Heart right ventricle (tissue), 16 donors: ENCODE measurements at regions of chr7 and their contacts with region 1.

Region 1: GRCh38 chr7:99040104-99040958 is 103.6 kb downstream of the SMURF1 start:
- DNase-seq: peak; percentile 64 to 91
- ATAC-seq: peak; percentile 76 to 91 (median 85)
- H3K4me3 ChIP-seq: no peak overlapping the region
- H3K27ac ChIP-seq: peak overlapping the region in 6 of 10 donors; percentile 27 to 67 (median 49)
- H3K4me1 ChIP-seq: peaks cover 0 to 42% (median 9%) of the 10 kb centered on the region in 9 donors
- H3K27me3 ChIP-seq: no peaks in the 10 kb centered on the region
- CTCF ChIP-seq: peak; percentile 61 to 85 (median 77)

Region 2: DNA sequence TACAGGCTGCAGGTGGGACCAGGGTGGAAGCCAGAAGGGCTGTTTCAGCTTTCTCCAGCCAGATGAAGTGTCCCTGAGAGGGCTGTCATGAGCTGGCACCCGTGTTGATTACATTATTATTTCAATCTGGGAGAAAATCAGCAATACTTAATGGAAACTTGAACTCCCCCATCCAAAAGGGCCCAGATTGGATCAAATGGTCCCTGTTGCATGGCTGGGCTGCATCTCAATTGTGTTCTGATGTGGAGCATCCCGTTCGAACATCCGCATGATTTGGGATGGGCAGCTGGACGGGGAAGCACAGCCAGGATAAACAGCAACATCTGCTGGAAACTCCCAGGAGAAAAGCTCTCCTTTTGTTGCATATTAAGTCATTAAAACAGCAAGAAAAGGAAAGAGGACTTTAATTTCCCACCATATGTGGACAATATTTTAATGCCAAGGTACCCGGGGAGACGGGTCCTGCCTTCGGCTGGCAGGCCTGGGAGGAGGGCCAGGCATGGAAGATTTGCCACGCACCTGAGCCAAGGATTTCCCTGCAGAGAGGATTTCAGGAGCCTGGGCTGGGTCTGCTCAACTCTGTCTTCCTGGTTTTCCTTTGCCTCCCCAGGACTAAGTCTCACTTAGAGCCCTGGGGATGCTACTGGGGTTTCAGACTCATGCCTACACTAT is 370.9 kb before region 1 on chr7:
- intact Hi-C with region 1: no loop called
- DNase-seq: peak in 1 of 2 donors; percentile 13
- ATAC-seq: peak in 2 of 8 donors; percentile 44 to 57
- H3K4me3 ChIP-seq: no peak overlapping the region
- H3K27ac ChIP-seq: no peak overlapping the region
- H3K4me1 ChIP-seq: no peaks in the 10 kb centered on the region
- H3K27me3 ChIP-seq: peaks cover 0 to 35% (median 18%) of the 10 kb centered on the region in 7 donors
- CTCF ChIP-seq: no peak

Region 3: DNA sequence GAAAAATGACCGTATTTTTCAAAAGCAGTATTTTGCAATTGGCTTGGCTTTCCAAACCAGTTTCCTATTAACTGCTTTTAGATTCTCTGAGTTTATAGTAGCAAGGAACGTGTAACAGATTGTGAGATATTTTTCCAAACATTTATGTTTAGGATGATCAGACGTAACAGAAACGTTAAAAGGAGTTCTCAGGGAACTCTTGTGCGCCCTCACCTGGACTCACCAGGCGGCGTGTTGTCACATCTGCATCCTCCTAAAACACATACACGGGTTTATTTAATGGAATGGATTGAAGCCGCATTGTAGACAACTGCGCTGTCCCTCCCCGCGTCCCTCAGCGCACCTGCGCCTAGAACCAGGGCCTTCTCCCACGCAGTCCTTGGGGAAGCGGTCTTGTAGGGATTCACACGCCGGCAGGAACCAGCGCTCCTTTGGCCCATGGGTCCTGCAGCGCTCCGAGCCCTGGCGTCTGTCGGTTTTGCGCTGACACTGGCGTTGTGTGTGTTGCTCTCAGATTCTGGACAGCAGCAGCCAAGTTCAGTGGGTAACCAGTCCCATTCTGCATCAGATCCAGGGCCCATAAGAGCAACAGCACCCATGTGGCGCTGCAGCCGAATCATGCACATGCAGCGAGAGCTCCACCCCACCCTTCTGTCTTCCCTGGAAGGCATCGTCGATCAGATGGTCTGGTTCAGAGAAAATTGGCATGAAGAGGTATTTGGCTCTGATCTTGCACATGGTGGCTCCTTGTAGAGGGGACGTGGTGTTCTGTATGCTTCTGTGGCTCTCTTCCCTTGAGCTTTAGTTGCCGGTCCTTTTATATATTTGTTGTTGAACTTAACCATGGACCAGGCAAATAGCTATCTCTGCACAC is 47.1 kb before region 1 on chr7:
- intact Hi-C with region 1: no loop called
- DNase-seq: no peak
- ATAC-seq: peak in 1 of 8 donors; percentile 22
- H3K4me3 ChIP-seq: no peak overlapping the region
- H3K27ac ChIP-seq: no peak overlapping the region
- H3K4me1 ChIP-seq: no peaks in the 10 kb centered on the region
- H3K27me3 ChIP-seq: no peaks in the 10 kb centered on the region
- CTCF ChIP-seq: no peak

Region 4: DNA sequence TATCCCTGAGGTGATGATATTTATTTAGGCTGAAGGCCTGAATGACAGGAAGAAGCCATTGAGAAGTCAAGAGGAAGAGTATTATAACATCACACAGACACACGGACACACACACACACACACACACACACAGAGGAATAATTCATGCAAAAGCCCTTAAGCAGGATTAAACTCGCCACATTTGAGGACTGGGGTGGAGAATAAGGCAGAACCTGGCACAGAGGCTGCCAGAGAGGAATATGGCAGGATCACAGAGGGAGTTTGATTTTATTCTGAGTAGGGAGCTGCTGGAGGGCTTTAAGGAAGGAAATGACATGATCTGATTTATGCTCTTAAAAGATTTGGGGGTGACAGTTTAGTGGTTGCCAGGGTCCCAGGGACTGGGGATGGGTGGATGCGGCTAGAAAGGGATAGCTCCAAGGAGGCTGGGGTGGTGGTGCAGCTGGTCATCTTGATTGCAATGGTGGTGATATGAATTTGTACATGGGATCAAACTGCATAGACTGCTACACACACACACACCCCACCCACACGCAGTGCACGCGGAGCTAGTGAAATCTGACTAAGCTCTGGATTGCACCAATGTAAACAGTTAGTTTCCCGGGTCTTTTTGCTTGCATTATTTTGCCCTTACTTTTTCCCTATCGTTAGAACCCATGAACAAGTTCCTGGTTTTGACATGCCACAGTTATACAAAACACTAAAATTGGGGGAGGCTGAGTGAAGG is 92.4 kb after region 1 on chr7:
- intact Hi-C with region 1: no loop called
- DNase-seq: no peak
- ATAC-seq: no peak
- H3K4me3 ChIP-seq: no peak overlapping the region
- H3K27ac ChIP-seq: no peak overlapping the region
- H3K4me1 ChIP-seq: peaks cover 0 to 88% (median 56%) of the 10 kb centered on the region in 9 donors
- H3K27me3 ChIP-seq: no peaks in the 10 kb centered on the region
- CTCF ChIP-seq: no peak

Region 5: DNA sequence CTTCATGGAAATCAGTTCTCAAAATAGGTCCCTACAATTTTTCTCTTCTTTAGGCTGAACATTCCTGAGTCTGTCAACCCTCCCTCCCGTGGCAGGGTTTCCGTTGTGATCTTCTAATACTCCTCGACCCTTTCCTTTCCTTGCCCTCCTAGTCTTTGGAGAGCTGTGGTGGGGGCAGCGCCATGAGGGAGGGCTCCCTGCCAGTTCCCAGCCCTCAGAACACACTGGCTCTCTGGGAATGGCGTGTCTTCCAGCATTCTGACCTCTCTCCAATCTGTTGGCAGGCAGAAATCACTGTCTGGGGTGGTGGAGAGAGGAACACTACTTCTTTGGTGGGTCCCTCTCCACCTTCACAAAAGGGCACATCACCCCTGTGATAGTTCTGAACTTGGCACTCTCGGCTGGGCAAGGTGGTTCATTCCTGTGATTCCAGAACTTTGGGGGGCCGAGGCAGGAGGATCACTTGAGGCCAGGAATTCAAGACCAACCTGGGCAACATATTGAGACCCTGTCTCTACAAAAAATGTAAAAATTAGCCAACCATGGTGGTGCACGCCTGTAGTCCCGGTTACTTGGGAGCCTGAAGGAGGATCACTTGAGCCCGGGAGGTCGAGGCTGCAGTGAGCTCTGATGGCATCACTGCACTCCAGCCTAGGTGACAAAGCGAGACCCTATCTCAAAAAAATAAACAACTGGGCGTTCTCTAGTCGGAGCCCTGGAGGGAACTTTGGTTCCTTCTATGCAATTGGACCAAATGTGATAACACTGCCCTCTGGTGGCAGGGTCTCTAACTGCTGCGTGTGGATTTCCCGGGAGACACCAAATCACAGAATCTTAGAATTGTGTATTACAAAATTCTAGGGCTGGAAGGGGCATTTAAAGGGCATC is 272.2 kb after region 1 on chr7:
- intact Hi-C with region 1: loop called (anchors 1 to 2 kb)
- DNase-seq: peak; percentile 58 to 62
- ATAC-seq: peak in 7 of 8 donors; percentile 43 to 88 (median 74)
- H3K4me3 ChIP-seq: peak overlapping the region in 1 of 10 donors; percentile 19
- H3K27ac ChIP-seq: no peak overlapping the region
- H3K4me1 ChIP-seq: peaks cover 0 to 9% (median 2%) of the 10 kb centered on the region in 9 donors
- H3K27me3 ChIP-seq: no peaks in the 10 kb centered on the region
- CTCF ChIP-seq: peak; percentile 85 to 92 (median 90)